Mammary epithelial cell (primary cell): ENCODE measurements at regions of chr5 and their contacts with region 1.

Region 1: GRCh38 chr5:82494942-82495341 is 216.8 kb upstream of the RPS23 start:
- DNase-seq: no peak
- H3K4me3 ChIP-seq: no peak overlapping the region
- H3K27ac ChIP-seq: no peak overlapping the region
- H3K4me1 ChIP-seq: no peaks in the 10 kb centered on the region
- H3K27me3 ChIP-seq: peaks cover 2% of the 10 kb centered on the region
- CTCF ChIP-seq: peak; percentile 25 to 45

Region 2: DNA sequence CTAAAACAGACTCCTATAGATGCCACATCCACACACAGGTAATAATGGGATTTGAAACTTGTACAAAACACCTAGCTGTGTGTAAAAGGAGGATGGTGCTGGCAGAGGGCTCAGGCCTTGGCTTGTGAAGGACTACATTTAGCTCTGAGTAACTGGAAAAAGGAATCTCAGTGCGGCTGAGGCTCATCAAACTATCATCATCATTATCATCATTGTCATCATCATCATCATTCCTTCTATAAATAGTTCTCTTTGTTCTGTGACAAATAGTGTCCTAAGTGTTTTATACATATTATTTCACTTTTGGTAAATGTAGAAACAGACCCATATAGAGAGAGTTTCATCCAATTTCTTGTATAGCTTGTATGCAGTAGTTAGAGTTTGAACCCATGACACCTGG is 66.3 kb before region 1 on chr5:
- CTCF ChIA-PET with region 1: no interaction called
- dilution Hi-C with region 1: no loop called
- in situ Hi-C with region 1: no loop called
- intact Hi-C with region 1: loop called (anchors 2 kb)
- DNase-seq: no peak
- H3K4me3 ChIP-seq: no peak overlapping the region
- H3K27ac ChIP-seq: no peak overlapping the region
- H3K4me1 ChIP-seq: no peaks in the 10 kb centered on the region
- H3K27me3 ChIP-seq: no peaks in the 10 kb centered on the region
- CTCF ChIP-seq: no peak